Activated naive CD4-positive, alpha-beta T cell treated with anti-CD3 and anti-CD28 coated beads for 36 hours (primary cell): ENCODE measurements at regions of chr5 and their contacts with region 1.

Region 1: GRCh38 chr5:151825445-151825844 is 53.7 kb downstream of the G3BP1 start:
- DNase-seq: peak; percentile 52
- H3K4me3 Mint-ChIP-seq: no peak overlapping the region
- H3K27ac Mint-ChIP-seq: no peak overlapping the region
- H3K4me1 Mint-ChIP-seq: peaks cover 3% of the 10 kb centered on the region
- H3K27me3 Mint-ChIP-seq: no peaks in the 10 kb centered on the region

Region 2: GRCh38 chr5:152271420-152271819 is 446.0 kb after region 1 on chr5:
- CTCF ChIA-PET with region 1: no interaction called
- intact Hi-C with region 1: loop called (anchors 1 kb)
- DNase-seq: peak; percentile 5
- H3K4me3 Mint-ChIP-seq: no peak overlapping the region
- H3K27ac Mint-ChIP-seq: no peak overlapping the region
- H3K4me1 Mint-ChIP-seq: no peaks in the 10 kb centered on the region
- H3K27me3 Mint-ChIP-seq: no peaks in the 10 kb centered on the region

Region 3: GRCh38 chr5:152349683-152350526 is 524.5 kb after region 1 on chr5:
- CTCF ChIA-PET with region 1: interaction called, 30 read pairs
- intact Hi-C with region 1: loop called (anchors 1 kb)
- DNase-seq: peak; percentile 56
- H3K4me3 Mint-ChIP-seq: no peak overlapping the region
- H3K27ac Mint-ChIP-seq: no peak overlapping the region
- H3K4me1 Mint-ChIP-seq: no peaks in the 10 kb centered on the region
- H3K27me3 Mint-ChIP-seq: peaks cover 8% of the 10 kb centered on the region

Region 4: GRCh38 chr5:152514827-152515397 is 689.5 kb after region 1 on chr5:
- CTCF ChIA-PET with region 1: interaction called, 5 read pairs
- intact Hi-C with region 1: loop called (anchors 2 kb)
- DNase-seq: no peak
- H3K4me3 Mint-ChIP-seq: no peak overlapping the region
- H3K27ac Mint-ChIP-seq: no peak overlapping the region
- H3K4me1 Mint-ChIP-seq: no peaks in the 10 kb centered on the region
- H3K27me3 Mint-ChIP-seq: peaks cover 10% of the 10 kb centered on the region